Calu3 (cell line): ENCODE measurements at regions of chr16 and their contacts with region 1.

Region 1: DNA sequence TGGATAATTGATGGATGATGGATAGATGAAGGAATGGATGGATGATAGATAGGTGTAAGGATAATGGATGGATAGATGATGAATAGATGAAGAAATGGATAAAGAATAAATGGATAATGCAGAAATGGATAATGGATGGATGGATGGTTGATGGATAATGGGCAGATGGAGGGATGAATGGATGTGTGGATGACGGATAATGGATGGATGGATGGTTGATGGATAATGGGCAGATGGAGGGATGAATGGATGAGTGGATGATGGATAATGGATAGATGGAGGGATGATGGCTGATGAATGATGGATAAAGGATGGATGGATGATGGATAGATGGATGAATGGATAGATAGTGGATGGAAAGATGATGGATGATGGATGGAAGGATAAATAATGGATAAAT is 239.2 kb downstream of the KATNIP start:
- DNase-seq: no peak
- H3K4me3 Mint-ChIP-seq: no peak overlapping the region
- H3K27ac Mint-ChIP-seq: no peak overlapping the region
- H3K4me1 Mint-ChIP-seq: no peaks in the 10 kb centered on the region
- H3K27me3 Mint-ChIP-seq: peaks cover 28% of the 10 kb centered on the region
- CTCF ChIP-seq: no peak

Region 2: DNA sequence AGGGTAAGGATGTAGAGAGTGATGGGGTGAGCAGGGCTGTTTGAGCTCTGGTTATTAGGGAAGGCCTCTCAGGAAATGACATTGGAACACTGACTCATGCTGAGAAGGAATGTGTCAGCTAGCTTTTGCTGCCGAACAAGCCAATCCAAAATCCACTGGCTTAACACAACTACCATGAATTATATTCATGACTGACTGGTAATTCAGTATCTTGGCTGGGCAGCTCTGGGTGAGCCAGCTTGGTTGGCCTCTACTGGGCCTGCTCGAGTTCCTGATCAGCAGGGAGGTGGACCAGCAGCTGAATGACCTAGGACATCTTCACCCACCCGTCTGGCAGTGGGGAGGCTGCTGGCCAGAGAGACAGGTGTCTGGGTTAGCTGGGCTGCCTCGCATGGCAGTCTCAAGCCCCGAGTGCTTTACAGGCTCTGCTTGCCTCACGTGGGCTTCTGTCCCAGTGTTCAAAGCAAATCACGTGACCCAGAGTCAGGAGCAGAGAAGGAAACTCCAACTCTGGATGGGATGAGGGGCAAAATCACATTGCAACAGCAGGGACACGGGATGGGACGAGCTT is 29.8 kb before region 1 on chr16:
- CTCF ChIA-PET with region 1: interaction called, 14 read pairs
- intact Hi-C with region 1: no loop called
- DNase-seq: no peak
- H3K4me3 Mint-ChIP-seq: no peak overlapping the region
- H3K27ac Mint-ChIP-seq: no peak overlapping the region
- H3K4me1 Mint-ChIP-seq: no peaks in the 10 kb centered on the region
- H3K27me3 Mint-ChIP-seq: no peaks in the 10 kb centered on the region
- CTCF ChIP-seq: no peak

Region 3: GRCh38 chr16:28025631-28026030 is 236.5 kb after region 1 on chr16:
- CTCF ChIA-PET with region 1: no interaction called
- intact Hi-C with region 1: no loop called
- DNase-seq: no peak
- H3K4me3 Mint-ChIP-seq: no peak overlapping the region
- H3K27ac Mint-ChIP-seq: no peak overlapping the region
- H3K4me1 Mint-ChIP-seq: no peaks in the 10 kb centered on the region
- H3K27me3 Mint-ChIP-seq: peaks cover 69% of the 10 kb centered on the region
- CTCF ChIP-seq: no peak